Mammary epithelial cell (primary cell): ENCODE measurements at regions of chr6 and their contacts with region 1.

Region 1: GRCh38 chr6:81981812-81982211 is 229.3 kb upstream of the TENT5A start:
- DNase-seq: peak; percentile 63
- H3K4me3 ChIP-seq: no peak overlapping the region
- H3K27ac ChIP-seq: peak overlapping the region; percentile 84
- H3K4me1 ChIP-seq: peaks cover 10% of the 10 kb centered on the region
- H3K27me3 ChIP-seq: no peaks in the 10 kb centered on the region
- CTCF ChIP-seq: no peak

Region 2: DNA sequence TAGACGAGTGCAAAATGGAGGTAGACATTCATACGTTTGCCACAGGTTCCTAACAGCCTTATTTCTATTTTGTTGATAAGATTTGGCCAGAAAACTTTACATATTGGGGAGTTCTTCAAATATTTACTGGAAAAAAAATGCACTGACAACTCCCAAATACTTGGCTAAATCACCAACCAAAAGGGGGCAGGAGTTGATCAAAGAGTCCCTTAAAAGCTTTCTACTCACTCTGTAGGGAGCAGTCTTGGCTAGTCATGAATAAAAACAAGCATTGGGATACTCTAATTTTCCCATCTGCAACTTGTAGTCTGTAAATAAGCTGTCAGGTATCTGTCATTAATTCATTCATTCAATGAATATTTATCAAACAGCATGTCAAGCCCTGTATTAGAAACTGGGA is 247.7 kb before region 1 on chr6:
- CTCF ChIA-PET with region 1: no interaction called
- dilution Hi-C with region 1: no loop called
- in situ Hi-C with region 1: no loop called
- intact Hi-C with region 1: loop called (anchors 5 kb)
- DNase-seq: no peak
- H3K4me3 ChIP-seq: no peak overlapping the region
- H3K27ac ChIP-seq: no peak overlapping the region
- H3K4me1 ChIP-seq: peaks cover 10% of the 10 kb centered on the region
- H3K27me3 ChIP-seq: no peaks in the 10 kb centered on the region
- CTCF ChIP-seq: peak in 1 of 2 donors; percentile 34

Region 3: DNA sequence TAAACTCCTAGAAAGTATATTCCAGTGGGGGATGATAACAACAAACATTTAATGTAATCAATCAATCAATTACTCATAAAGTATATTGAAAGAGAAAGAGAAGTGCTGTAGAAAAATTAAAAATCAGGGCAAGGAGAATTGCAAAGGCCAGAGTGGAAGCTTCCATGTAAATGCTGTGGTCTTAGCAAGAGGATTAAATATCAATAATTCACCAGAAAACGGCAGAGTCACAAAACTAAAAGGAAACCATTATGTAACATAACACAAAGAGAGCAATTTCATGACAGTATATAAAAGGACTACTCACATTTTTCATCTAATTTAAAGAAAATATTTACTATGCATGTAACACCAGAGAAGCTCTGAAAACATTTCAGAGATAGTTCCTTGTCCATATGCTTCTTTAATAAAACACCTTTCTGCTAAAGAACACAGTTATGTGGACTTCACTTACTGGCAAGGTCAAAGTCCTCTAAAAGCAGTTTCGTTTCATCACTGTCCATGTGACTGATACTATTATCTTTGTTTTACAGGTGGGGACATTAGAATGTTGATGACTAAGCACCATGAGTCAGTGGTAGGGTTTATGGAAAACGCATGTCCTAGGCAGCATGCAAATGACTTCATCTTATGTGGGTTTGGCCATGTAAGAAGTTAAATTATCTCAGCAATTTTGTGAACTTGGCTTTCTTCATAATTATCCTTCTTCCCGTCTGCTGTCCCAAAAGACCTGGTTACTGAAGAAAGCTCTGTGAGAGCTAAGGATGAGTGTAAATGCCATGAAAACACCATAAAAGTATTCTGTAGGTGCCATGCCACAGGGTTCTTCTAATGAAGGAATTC is 43.6 kb before region 1 on chr6:
- CTCF ChIA-PET with region 1: no interaction called
- dilution Hi-C with region 1: no loop called
- in situ Hi-C with region 1: no loop called
- intact Hi-C with region 1: loop called (anchors 5 kb)
- DNase-seq: peak; percentile 97
- H3K4me3 ChIP-seq: no peak overlapping the region
- H3K27ac ChIP-seq: peak overlapping the region; percentile 98
- H3K4me1 ChIP-seq: peaks cover 29% of the 10 kb centered on the region
- H3K27me3 ChIP-seq: no peaks in the 10 kb centered on the region
- CTCF ChIP-seq: no peak

Region 4: DNA sequence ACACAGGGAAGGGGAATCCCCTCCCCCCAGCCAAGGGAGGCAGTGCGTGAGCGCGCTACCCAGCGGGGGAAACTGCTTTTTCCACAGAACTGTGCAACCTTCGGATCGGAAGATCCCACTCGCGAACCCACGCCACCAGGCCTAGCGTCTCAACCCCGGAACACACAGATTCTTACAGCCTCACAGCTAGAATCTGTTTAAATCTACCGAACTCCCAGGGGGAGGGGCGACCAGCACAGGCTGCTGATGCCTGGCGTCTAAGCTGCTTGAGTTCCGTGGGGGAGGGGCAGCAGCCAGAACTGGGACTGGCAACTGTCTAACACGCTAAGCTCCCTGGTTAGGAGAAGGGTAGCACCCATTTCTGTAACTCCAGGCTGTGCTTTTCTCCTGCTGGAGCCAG is 12.0 kb before region 1 on chr6:
- CTCF ChIA-PET with region 1: no interaction called
- dilution Hi-C with region 1: no loop called
- in situ Hi-C with region 1: no loop called
- intact Hi-C with region 1: no loop called
- DNase-seq: no peak
- H3K4me3 ChIP-seq: no peak overlapping the region
- H3K27ac ChIP-seq: no peak overlapping the region
- H3K4me1 ChIP-seq: no peaks in the 10 kb centered on the region
- H3K27me3 ChIP-seq: no peaks in the 10 kb centered on the region
- CTCF ChIP-seq: no peak

Region 5: DNA sequence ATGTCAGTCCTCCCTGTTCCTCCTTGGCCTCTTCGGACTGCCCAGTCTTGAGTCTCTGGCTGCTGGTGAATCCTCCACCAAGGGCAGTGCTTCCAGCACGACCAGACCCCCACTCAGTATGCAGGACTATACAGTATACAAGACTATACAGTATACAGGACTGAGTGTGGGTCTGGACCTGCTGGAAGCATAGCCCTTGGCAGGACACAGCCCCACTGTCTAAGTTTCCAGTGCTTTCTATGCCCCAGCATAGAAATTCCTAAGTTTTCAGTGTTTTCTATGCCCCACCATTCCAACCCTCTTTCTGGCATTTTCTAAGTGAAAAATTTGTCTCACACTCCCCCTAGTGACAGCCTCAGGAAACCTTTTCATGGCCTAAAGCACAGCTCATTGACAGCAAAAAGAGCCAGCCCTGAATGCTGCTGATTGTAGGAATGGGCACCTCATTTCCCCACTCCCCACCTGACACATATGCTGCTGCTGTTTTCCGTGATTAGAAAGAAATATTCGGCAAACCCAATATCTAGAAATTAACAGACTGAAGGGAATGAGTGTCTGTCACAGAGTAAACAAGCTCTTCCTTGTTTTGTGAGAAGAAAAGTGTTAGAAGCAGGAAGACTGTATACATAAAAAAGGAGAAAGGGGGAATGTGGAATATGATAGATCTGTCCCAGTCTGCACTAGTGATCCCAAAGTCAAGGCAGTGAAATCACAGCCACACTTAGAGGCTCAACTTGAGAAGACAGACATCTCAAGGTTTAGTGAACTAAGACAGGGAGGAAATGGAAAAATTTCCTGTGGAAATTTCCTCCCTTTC is 58.8 kb after region 1 on chr6:
- CTCF ChIA-PET with region 1: no interaction called
- dilution Hi-C with region 1: no loop called
- in situ Hi-C with region 1: no loop called
- intact Hi-C with region 1: loop called (anchors 2 kb)
- DNase-seq: peak; percentile 24
- H3K4me3 ChIP-seq: no peak overlapping the region
- H3K27ac ChIP-seq: no peak overlapping the region
- H3K4me1 ChIP-seq: no peaks in the 10 kb centered on the region
- H3K27me3 ChIP-seq: no peaks in the 10 kb centered on the region
- CTCF ChIP-seq: peak; percentile 82 to 87

Region 6: GRCh38 chr6:82144007-82144851 is 162.4 kb after region 1 on chr6:
- CTCF ChIA-PET with region 1: no interaction called
- dilution Hi-C with region 1: no loop called
- in situ Hi-C with region 1: no loop called
- intact Hi-C with region 1: no loop called
- DNase-seq: peak; percentile 96
- H3K4me3 ChIP-seq: no peak overlapping the region
- H3K27ac ChIP-seq: peak overlapping the region; percentile 88
- H3K4me1 ChIP-seq: peaks cover 23% of the 10 kb centered on the region
- H3K27me3 ChIP-seq: no peaks in the 10 kb centered on the region
- CTCF ChIP-seq: no peak